ENCODE measurements at regions of chr5 and their contacts with region 1.

Region 1: DNA sequence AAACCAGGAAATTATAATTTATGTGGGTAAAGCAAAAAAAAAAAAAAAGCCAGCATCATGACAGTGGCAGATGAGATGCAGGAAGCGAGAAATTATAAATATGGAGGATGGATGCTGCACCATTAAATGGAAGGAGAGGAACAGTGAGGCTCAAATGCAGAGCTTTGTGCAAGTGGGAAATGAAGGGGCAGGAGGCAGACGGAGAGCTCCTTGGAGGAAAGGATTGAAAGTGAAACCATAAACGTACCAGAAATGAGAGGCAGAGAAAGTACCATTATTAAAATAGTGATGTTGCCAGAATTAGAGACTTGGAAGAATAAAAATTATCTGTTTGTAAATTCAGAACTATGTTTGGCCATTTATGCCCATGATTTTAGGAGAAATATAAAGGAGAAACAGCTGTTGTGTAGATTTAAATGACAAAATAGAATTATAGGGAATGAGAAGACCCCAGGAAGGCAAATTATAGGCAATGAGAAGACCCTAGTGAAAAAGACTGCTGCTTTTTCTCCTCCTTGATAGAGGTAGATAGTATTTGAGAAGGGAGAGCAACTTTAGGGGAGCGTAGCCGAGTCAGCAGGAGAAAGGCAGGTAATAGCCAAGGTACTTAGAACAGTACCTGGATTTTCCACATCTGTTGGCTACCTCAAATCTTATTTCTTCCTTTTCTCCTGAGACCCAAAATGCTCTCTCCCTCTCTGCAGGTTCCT is 341.0 kb upstream of the CD180 start:
- DNase-seq: peak in 2 of 9 experiments; percentile 37 to 58
- ATAC-seq: no peak
- H3K4me3 ChIP-seq: peak overlapping the region; percentile 45 to 46
- H3K4me3 Mint-ChIP-seq: no peak overlapping the region
- H3K27ac ChIP-seq: peak overlapping the region; percentile 11 to 53
- H3K27ac Mint-ChIP-seq: no peak overlapping the region
- H3K4me1 ChIP-seq: peaks cover 16% of the 10 kb centered on the region
- H3K4me1 Mint-ChIP-seq: no peaks in the 10 kb centered on the region
- H3K27me3 ChIP-seq: no peaks in the 10 kb centered on the region
- H3K27me3 Mint-ChIP-seq: no peaks in the 10 kb centered on the region
- CTCF ChIP-seq: no peak

Region 2: GRCh38 chr5:67483453-67484030 is 54.1 kb before region 1 on chr5:
- CTCF ChIA-PET with region 1: no interaction called
- POLR2A ChIA-PET with region 1: no interaction called
- intact Hi-C with region 1: loop called in 1 of 2 experiments (anchors 10 kb)
- DNase-seq: no peak
- ATAC-seq: no peak
- H3K4me3 ChIP-seq: no peak overlapping the region
- H3K4me3 Mint-ChIP-seq: no peak overlapping the region
- H3K27ac ChIP-seq: no peak overlapping the region
- H3K27ac Mint-ChIP-seq: no peak overlapping the region
- H3K4me1 ChIP-seq: no peaks in the 10 kb centered on the region
- H3K4me1 Mint-ChIP-seq: no peaks in the 10 kb centered on the region
- H3K27me3 ChIP-seq: no peaks in the 10 kb centered on the region
- H3K27me3 Mint-ChIP-seq: no peaks in the 10 kb centered on the region
- CTCF ChIP-seq: no peak

Region 3: DNA sequence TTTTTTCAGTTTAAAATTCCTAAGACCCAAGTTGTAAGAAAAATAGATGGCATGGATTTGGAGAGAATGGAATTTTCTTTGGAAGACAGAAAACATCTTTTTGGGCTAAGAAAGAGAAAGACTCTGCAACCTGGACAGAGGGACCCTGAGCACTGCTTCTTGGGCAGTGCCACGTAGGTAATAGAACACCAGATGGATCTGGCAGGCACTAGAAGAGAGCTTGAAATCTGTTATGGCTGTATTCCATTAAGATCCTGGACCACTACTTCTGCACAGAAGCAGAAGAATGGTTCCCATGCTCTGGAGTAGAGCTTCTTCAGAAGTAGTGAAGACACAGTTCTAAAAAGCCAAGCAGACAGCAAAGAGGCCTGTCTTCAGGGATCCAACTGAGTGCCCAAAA is 34.6 kb before region 1 on chr5:
- CTCF ChIA-PET with region 1: no interaction called
- POLR2A ChIA-PET with region 1: no interaction called
- intact Hi-C with region 1: loop called in 1 of 2 experiments (anchors 5 kb)
- DNase-seq: no peak
- ATAC-seq: no peak
- H3K4me3 ChIP-seq: no peak overlapping the region
- H3K4me3 Mint-ChIP-seq: no peak overlapping the region
- H3K27ac ChIP-seq: no peak overlapping the region
- H3K27ac Mint-ChIP-seq: no peak overlapping the region
- H3K4me1 ChIP-seq: no peaks in the 10 kb centered on the region
- H3K4me1 Mint-ChIP-seq: no peaks in the 10 kb centered on the region
- H3K27me3 ChIP-seq: no peaks in the 10 kb centered on the region
- H3K27me3 Mint-ChIP-seq: no peaks in the 10 kb centered on the region
- CTCF ChIP-seq: no peak

Region 4: GRCh38 chr5:67515020-67515689 is 22.4 kb before region 1 on chr5:
- CTCF ChIA-PET with region 1: no interaction called
- POLR2A ChIA-PET with region 1: interaction called, 4 read pairs
- intact Hi-C with region 1: loop called in 1 of 2 experiments (anchors 2 kb)
- DNase-seq: peak in 8 of 9 experiments; percentile 13 to 86 (median 52)
- ATAC-seq: peak; percentile 77
- H3K4me3 ChIP-seq: peak overlapping the region in 1 of 2 experiments; percentile 0
- H3K4me3 Mint-ChIP-seq: peak overlapping the region; percentile 59
- H3K27ac ChIP-seq: peak overlapping the region in 1 of 2 experiments; percentile 62
- H3K27ac Mint-ChIP-seq: peak overlapping the region; percentile 91
- H3K4me1 ChIP-seq: peaks cover 49% of the 10 kb centered on the region
- H3K4me1 Mint-ChIP-seq: peaks cover 72% of the 10 kb centered on the region
- H3K27me3 ChIP-seq: no peaks in the 10 kb centered on the region
- H3K27me3 Mint-ChIP-seq: no peaks in the 10 kb centered on the region
- CTCF ChIP-seq: no peak

Region 5: GRCh38 chr5:67620424-67621397 is 83.1 kb after region 1 on chr5:
- CTCF ChIA-PET with region 1: no interaction called
- POLR2A ChIA-PET with region 1: no interaction called
- intact Hi-C with region 1: loop called in 1 of 2 experiments (anchors 5 kb)
- DNase-seq: no peak
- ATAC-seq: no peak
- H3K4me3 ChIP-seq: no peak overlapping the region
- H3K4me3 Mint-ChIP-seq: no peak overlapping the region
- H3K27ac ChIP-seq: no peak overlapping the region
- H3K27ac Mint-ChIP-seq: no peak overlapping the region
- H3K4me1 ChIP-seq: no peaks in the 10 kb centered on the region
- H3K4me1 Mint-ChIP-seq: no peaks in the 10 kb centered on the region
- H3K27me3 ChIP-seq: no peaks in the 10 kb centered on the region
- H3K27me3 Mint-ChIP-seq: peaks cover 3% of the 10 kb centered on the region
- CTCF ChIP-seq: no peak